Activated CD8-positive, alpha-beta T cell treated with anti-CD3 and anti-CD28 coated beads, Interleukin-2, amount 10 ng/mL, durations not matched to agents 7 days and 5 days (primary cell): ENCODE measurements at regions of chr6 and their contacts with region 1.

Region 1: GRCh38 chr6:34027445-34027936 is 118.4 kb downstream of the GRM4 start:
- DNase-seq: peak; percentile 69
- ATAC-seq: peak; percentile 69
- H3K4me3 Mint-ChIP-seq: no peak overlapping the region
- H3K27ac Mint-ChIP-seq: no peak overlapping the region
- H3K4me1 Mint-ChIP-seq: no peaks in the 10 kb centered on the region
- H3K27me3 Mint-ChIP-seq: peaks cover 3% of the 10 kb centered on the region

Region 2: DNA sequence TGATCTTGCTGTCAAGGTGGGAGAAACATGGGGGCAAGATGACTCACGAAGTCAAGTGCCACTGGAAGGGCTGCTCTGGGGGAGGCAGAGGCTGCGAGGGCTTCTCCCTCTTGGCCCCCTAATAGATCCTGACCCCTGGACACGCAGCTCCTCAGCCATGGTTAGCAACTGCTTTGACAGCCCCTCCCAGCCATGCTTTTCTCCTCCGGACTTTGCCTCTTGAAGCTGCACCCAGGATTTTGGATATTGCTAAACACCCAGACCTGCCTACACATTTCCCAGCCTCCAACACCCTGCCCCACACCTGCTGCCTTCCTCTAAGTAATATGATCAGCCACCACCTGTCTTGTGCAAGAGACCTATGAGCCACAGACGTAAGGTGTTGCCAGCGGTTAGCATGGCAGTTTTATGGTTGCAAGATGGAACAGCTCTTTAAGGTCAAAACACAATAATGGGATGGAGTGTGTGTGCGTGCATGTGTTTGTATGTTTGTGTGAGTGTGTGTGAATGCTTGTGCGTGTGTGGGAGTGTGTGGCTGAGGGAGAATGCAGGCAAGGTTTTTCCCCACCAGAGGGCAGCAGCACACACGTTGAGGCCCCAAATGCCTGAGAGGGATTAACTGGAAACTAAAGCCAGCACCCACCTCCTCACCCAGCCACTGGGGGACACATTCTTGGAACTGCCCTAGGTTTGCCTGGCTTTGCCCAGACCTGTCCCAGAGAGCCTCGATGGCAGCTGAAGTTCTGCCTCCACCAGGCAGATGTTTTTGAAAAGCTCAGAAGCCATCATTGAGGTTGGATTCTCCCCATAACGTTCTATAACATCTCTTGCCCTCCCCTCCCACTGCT is 283.3 kb before region 1 on chr6:
- CTCF ChIA-PET with region 1: interaction called, 13 read pairs
- POLR2A ChIA-PET with region 1: no interaction called
- DNase-seq: peak; percentile 80
- ATAC-seq: peak; percentile 87
- H3K4me3 Mint-ChIP-seq: no peak overlapping the region
- H3K27ac Mint-ChIP-seq: no peak overlapping the region
- H3K4me1 Mint-ChIP-seq: no peaks in the 10 kb centered on the region
- H3K27me3 Mint-ChIP-seq: peaks cover 13% of the 10 kb centered on the region

Region 3: DNA sequence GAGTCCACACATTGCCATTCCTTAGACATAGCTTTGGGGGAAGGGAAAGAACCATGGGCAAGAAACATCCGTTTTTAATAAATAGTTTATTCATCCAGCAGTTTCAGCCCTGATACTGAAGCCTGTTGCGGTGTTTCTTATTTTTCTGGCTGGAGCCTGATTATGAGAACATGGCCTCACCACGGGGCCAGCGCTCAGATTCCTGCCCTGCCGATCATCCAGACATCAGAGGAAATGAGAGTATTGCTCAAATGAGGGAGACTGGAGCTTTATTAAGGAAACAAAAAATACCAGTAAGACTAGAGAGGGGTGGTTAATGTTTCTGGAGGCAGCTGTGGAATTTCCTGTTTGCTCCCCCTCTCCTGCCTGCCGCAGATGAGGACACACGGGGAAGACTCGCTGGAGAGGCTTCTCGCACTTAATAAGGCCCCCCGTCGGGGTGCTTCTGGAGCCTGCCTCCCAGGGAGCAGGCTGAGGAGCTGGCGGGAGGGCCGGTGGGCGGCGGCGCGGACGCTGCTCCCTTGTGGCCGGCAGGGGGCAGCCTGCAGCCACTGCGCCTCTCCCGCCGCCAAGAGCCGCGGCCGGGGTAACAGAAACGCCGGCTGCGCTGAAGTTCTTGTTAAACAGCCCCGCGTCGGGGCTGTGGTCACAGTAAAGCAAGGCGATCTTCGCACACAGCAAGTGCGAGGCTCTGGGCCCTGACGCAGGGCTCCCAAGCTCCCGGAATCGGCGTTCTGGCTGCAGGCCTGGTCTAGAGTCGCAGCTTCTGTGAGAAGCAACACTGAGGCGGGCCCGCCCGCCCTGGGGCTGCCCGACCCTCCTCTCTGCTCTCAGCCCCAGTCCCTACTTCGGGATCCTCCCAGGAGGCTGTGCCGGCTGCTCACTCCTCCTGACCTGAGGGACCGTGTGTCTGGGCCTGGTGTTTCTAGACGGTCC is 256.1 kb before region 1 on chr6:
- CTCF ChIA-PET with region 1: interaction called, 158 read pairs
- POLR2A ChIA-PET with region 1: interaction called, 8 read pairs
- DNase-seq: peak; percentile 69
- ATAC-seq: peak; percentile 75
- H3K4me3 Mint-ChIP-seq: no peak overlapping the region
- H3K27ac Mint-ChIP-seq: no peak overlapping the region
- H3K4me1 Mint-ChIP-seq: peaks cover 3% of the 10 kb centered on the region
- H3K27me3 Mint-ChIP-seq: peaks cover 3% of the 10 kb centered on the region

Region 4: GRCh38 chr6:33851959-33852358 is 175.5 kb before region 1 on chr6:
- CTCF ChIA-PET with region 1: interaction called, 23 read pairs
- POLR2A ChIA-PET with region 1: no interaction called
- DNase-seq: peak; percentile 41
- ATAC-seq: no peak
- H3K4me3 Mint-ChIP-seq: no peak overlapping the region
- H3K27ac Mint-ChIP-seq: no peak overlapping the region
- H3K4me1 Mint-ChIP-seq: peaks cover 18% of the 10 kb centered on the region
- H3K27me3 Mint-ChIP-seq: peaks cover 59% of the 10 kb centered on the region

Region 5: GRCh38 chr6:33860706-33861474 is 166.6 kb before region 1 on chr6:
- CTCF ChIA-PET with region 1: interaction called, 15 read pairs
- POLR2A ChIA-PET with region 1: no interaction called
- DNase-seq: peak; percentile 68
- ATAC-seq: peak; percentile 27
- H3K4me3 Mint-ChIP-seq: no peak overlapping the region
- H3K27ac Mint-ChIP-seq: peak overlapping the region; percentile 36
- H3K4me1 Mint-ChIP-seq: peaks cover 64% of the 10 kb centered on the region
- H3K27me3 Mint-ChIP-seq: peaks cover 39% of the 10 kb centered on the region